ENCODE measurements at regions of chr21 and their contacts with region 1.

Region 1: DNA sequence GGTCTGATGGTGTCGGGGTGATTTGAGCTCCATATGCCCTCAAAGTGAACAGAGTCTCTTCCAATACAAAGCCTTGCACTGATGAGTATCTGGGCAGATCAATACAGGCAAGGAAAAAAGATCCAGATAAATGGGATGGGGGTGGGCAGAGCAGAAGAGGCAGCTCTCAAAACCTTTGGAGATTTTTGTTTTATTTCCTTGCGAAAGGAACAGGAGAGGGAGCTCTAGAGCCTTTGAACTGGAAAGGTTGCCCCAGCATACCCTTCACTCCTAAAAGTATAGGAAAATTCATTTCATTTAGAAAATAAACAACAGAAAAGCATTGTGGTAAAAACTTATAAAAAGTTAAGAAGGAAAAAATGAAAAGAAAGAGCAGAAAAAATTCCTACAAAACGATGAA is 31.4 kb upstream of the OLIG2 start:
- DNase-seq: no peak
- ATAC-seq: peak; percentile 56
- H3K4me3 Mint-ChIP-seq: no peak overlapping the region
- H3K27ac Mint-ChIP-seq: no peak overlapping the region
- H3K4me1 Mint-ChIP-seq: peaks cover 8% of the 10 kb centered on the region
- H3K27me3 Mint-ChIP-seq: no peaks in the 10 kb centered on the region; the same call in 1 of the 2 replicates
- CTCF ChIP-seq: no peak

Region 2: DNA sequence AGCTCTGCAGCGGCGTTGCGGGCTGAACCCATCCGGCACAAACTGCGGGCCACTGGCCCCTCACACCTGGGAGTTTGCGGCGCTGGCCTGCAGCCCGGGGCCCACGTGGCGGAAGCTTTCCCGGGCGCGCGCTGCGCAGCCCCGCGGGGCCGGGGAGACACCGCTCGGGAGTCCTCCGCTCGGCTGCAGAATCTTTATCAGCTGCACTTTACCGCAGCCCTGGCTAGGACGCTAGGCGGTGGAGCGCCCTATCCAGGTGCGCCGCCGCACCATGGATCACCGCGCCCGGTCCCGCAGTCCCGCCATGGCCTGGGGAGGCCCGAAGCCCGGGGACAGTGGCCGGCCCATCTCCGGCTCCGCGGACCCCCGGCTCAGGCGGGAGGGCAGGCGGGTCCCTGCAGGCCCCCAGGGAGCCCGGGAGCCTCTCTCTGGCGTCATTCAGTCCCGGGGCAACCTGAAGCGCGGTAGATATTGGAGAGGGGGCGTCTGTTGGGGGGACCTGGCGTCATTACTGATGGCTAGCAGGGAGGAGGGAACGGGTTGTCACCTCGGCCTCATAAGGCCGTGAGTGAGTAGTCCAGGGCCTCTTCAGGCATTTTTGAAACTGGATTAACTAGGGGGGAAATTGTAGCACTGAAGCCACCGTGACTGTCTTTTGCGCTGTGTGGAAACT is 25.7 kb after region 1 on chr21:
- CTCF ChIA-PET with region 1: interaction called, 20 read pairs
- POLR2A ChIA-PET with region 1: no interaction called
- DNase-seq: peak; percentile 56
- ATAC-seq: peak; percentile 55
- H3K4me3 Mint-ChIP-seq: peak overlapping the region; percentile 60
- H3K27ac Mint-ChIP-seq: no peak overlapping the region
- H3K4me1 Mint-ChIP-seq: peaks cover 41% of the 10 kb centered on the region
- H3K27me3 Mint-ChIP-seq: peaks cover 100% of the 10 kb centered on the region
- CTCF ChIP-seq: no peak

Measured in WTC11 (cell line).